Esophagus muscularis mucosa (tissue), 4 donors: ENCODE measurements at regions of chr4 and their contacts with region 1.

Region 1: GRCh38 chr4:114386637-114387233 is 211.9 kb upstream of the UGT8 start:
- DNase-seq: no peak
- H3K4me3 ChIP-seq: no peak overlapping the region
- H3K27ac ChIP-seq: no peak overlapping the region
- H3K4me1 ChIP-seq: peaks cover 0 to 8% (median 3%) of the 10 kb centered on the region in 4 donors
- H3K27me3 ChIP-seq: no peaks in the 10 kb centered on the region
- CTCF ChIP-seq: peak; percentile 57 to 66 (median 57)
- EP300 ChIP-seq: no peak
- POLR2A ChIP-seq: no peak

Region 2: GRCh38 chr4:114282937-114283336 is 103.8 kb before region 1 on chr4:
- intact Hi-C with region 1: no loop called
- DNase-seq: no peak
- H3K4me3 ChIP-seq: no peak overlapping the region
- H3K27ac ChIP-seq: no peak overlapping the region
- H3K4me1 ChIP-seq: peaks cover 0 to 5% (median 0%) of the 10 kb centered on the region in 4 donors
- H3K27me3 ChIP-seq: no peaks in the 10 kb centered on the region
- CTCF ChIP-seq: no peak
- EP300 ChIP-seq: no peak
- POLR2A ChIP-seq: no peak

Region 3: DNA sequence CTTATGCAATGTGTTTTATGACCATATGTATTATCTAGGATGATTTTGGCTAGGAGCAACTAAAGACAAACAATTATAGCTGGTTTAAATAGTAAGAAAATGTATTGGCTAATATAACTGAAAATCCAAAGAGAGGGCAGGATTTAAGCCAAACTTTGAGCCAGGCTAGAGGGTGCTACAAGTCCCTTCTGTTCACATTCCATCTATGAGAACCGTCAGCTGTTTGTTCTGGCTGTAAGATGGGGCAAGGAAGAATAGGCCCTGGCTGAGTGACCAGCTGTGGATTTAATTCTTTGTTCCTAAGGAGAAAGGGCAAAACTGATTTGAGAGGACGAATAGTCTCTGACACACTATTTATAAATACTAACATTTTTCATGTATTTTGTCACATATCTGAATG is 132.6 kb after region 1 on chr4:
- intact Hi-C with region 1: no loop called
- DNase-seq: no peak
- H3K4me3 ChIP-seq: no peak overlapping the region
- H3K27ac ChIP-seq: no peak overlapping the region
- H3K4me1 ChIP-seq: no peaks in the 10 kb centered on the region
- H3K27me3 ChIP-seq: no peaks in the 10 kb centered on the region
- CTCF ChIP-seq: no peak
- EP300 ChIP-seq: no peak
- POLR2A ChIP-seq: no peak

Region 4: DNA sequence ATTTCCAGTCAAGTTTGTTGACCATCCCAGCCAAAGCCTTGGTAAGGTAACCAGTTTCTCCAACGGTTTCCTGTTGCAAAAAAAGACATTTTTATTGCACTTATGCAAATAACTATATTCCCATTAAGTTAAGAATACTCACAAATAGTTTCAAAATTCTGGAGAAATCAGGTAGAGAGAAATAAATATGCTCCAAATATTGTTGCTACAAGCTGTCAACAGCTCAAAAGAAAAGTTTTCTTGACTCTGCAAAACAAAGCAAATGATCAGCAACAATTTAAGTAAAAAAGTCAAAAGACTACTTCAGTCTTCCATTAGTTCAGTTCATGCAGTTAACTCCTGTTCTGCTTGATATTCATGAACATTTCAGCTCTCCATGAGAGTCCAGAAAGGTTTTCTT is 162.9 kb after region 1 on chr4:
- intact Hi-C with region 1: no loop called
- DNase-seq: no peak
- H3K4me3 ChIP-seq: no peak overlapping the region
- H3K27ac ChIP-seq: no peak overlapping the region
- H3K4me1 ChIP-seq: no peaks in the 10 kb centered on the region
- H3K27me3 ChIP-seq: no peaks in the 10 kb centered on the region
- CTCF ChIP-seq: no peak
- EP300 ChIP-seq: no peak
- POLR2A ChIP-seq: no peak

Region 5: GRCh38 chr4:114659386-114660008 is 272.8 kb after region 1 on chr4:
- intact Hi-C with region 1: loop called (anchors 5 kb)
- DNase-seq: no peak
- H3K4me3 ChIP-seq: no peak overlapping the region
- H3K27ac ChIP-seq: no peak overlapping the region
- H3K4me1 ChIP-seq: no peaks in the 10 kb centered on the region
- H3K27me3 ChIP-seq: no peaks in the 10 kb centered on the region
- CTCF ChIP-seq: peak; percentile 49 to 75 (median 61)
- EP300 ChIP-seq: no peak
- POLR2A ChIP-seq: no peak

Region 6: DNA sequence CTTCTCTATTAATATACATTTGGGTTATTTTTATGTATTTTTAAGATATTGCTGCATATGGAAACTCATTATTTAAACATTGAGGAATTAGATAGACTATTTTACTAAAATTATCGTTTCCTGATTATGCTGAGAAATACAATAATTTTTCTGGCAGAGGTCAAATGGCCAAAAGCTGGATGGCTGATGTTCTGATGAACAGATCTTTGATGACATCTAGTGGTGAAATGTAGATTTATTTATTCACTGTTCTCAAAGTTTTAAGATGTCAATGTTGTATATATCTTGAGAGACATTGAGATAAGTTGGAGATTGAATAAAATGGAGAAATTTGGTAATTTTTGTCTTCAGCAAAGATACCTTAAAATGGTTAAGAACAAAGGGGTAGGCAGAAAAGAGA is 308.0 kb after region 1 on chr4:
- intact Hi-C with region 1: loop called (anchors 10 kb)
- DNase-seq: no peak
- H3K4me3 ChIP-seq: no peak overlapping the region
- H3K27ac ChIP-seq: no peak overlapping the region
- H3K4me1 ChIP-seq: no peaks in the 10 kb centered on the region
- H3K27me3 ChIP-seq: no peaks in the 10 kb centered on the region
- CTCF ChIP-seq: peak; percentile 40 to 55 (median 46)
- EP300 ChIP-seq: no peak
- POLR2A ChIP-seq: no peak